ENCODE measurements at regions of chr21 and their contacts with region 1.

Region 1: GRCh38 chr21:21406921-21407320 is 408.7 kb downstream of the NCAM2 start:
- DNase-seq: no peak
- H3K4me3 ChIP-seq: no peak overlapping the region
- H3K27ac ChIP-seq: no peak overlapping the region
- H3K4me1 ChIP-seq: no peaks in the 10 kb centered on the region
- H3K27me3 ChIP-seq: no peaks in the 10 kb centered on the region
- CTCF ChIP-seq: no peak
- POLR2A ChIP-seq: no peak

Region 2: GRCh38 chr21:21341041-21341440 is 65.9 kb before region 1 on chr21:
- intact Hi-C with region 1: loop called (anchors 10 kb)
- DNase-seq: no peak
- H3K4me3 ChIP-seq: no peak overlapping the region
- H3K27ac ChIP-seq: no peak overlapping the region
- H3K4me1 ChIP-seq: no peaks in the 10 kb centered on the region
- H3K27me3 ChIP-seq: no peaks in the 10 kb centered on the region
- CTCF ChIP-seq: no peak
- POLR2A ChIP-seq: no peak

Measured in prostate gland (tissue), 2 donors.